ENCODE measurements at regions of chr12 and their contacts with region 1.

Region 1: DNA sequence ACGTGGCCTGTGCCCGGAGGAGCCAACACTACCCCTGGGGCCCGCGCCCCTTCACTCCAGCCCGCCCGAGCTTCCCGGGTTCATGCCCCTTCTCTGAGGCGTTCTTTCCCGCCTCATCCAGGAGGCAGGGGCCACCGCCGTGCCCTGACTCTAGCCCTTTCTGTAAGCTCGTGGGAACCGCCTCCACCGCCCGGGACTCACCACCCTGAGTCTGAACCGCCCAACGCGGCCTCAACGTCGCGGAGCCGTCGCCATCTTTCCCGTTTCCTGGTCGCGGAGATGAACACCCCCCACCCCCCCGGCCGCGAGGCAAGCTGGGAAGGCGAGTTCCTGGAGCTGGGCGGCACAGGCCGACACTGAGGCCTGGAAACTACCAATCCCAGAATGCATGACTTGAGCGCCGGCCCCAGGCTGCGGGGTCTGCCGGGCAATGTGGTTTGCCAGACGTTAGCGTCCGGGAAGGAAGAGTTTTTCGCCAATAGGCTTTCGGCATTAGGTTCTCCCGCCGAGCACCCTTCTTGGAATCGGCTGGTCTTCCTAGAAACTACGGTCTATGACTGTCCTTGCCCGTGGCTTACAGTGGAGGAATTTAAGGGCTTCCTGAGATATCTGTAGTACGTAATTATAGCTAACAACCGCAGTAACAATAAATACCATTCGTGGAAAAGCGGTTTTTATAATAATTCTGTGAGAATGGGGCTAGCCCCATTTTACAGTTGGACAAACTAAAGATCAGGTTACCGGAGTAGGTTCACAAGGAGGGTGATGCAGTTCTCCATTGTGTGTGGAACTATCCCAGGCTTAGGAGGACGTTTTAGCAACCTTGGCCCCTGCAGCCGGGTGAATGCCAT is at the start of gene DDX23:
- DNase-seq: peak; percentile 95
- ATAC-seq: peak; percentile 97
- H3K4me3 ChIP-seq: peak within 1 kb of the TSS; percentile 76 to 97 (median 93)
- H3K4me3 Mint-ChIP-seq: peak within 1 kb of the TSS; percentile 97
- H3K27ac ChIP-seq: peak within 1 kb of the TSS; percentile 87 to 90
- H3K27ac Mint-ChIP-seq: peak within 1 kb of the TSS; percentile 98
- H3K4me1 ChIP-seq: peaks cover 14 to 25% of the 10 kb centered on the region in 2 donors
- H3K4me1 Mint-ChIP-seq: peaks cover 36% of the 10 kb centered on the region
- H3K27me3 ChIP-seq: no peaks in the 10 kb centered on the region
- H3K27me3 Mint-ChIP-seq: no peaks in the 10 kb centered on the region
- CTCF ChIP-seq: no peak
- total RNA-seq, gene DDX23: 135 and 156 TPM in 2 replicates

Region 2: DNA sequence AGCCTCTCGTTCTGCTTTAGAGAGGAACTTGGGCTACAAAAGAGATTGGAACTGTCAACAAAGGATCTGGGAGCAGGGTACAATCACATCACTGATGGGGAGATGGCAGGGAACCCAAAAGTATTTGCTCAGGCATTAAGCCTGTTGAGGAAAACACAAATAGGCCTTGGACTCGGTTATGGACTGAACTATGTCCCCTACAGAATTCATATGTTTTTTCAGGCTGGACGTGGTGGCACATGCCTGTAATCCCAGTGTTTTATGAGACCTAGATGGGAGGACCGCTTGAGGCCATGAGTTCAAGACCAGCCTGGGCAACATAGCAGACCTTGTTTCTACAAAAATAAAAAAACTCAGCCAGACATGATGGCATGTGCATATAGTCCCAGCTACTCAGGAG is 14.1 kb before region 1 on chr12:
- CTCF ChIA-PET with region 1: interaction called, 12 read pairs
- POLR2A ChIA-PET with region 1: no interaction called
- intact Hi-C with region 1: no loop called
- DNase-seq: no peak
- ATAC-seq: no peak
- H3K4me3 ChIP-seq: no peak overlapping the region
- H3K4me3 Mint-ChIP-seq: no peak overlapping the region
- H3K27ac ChIP-seq: no peak overlapping the region
- H3K27ac Mint-ChIP-seq: no peak overlapping the region
- H3K4me1 ChIP-seq: no peaks in the 10 kb centered on the region
- H3K4me1 Mint-ChIP-seq: no peaks in the 10 kb centered on the region
- H3K27me3 ChIP-seq: no peaks in the 10 kb centered on the region
- H3K27me3 Mint-ChIP-seq: no peaks in the 10 kb centered on the region
- CTCF ChIP-seq: no peak

Region 3: DNA sequence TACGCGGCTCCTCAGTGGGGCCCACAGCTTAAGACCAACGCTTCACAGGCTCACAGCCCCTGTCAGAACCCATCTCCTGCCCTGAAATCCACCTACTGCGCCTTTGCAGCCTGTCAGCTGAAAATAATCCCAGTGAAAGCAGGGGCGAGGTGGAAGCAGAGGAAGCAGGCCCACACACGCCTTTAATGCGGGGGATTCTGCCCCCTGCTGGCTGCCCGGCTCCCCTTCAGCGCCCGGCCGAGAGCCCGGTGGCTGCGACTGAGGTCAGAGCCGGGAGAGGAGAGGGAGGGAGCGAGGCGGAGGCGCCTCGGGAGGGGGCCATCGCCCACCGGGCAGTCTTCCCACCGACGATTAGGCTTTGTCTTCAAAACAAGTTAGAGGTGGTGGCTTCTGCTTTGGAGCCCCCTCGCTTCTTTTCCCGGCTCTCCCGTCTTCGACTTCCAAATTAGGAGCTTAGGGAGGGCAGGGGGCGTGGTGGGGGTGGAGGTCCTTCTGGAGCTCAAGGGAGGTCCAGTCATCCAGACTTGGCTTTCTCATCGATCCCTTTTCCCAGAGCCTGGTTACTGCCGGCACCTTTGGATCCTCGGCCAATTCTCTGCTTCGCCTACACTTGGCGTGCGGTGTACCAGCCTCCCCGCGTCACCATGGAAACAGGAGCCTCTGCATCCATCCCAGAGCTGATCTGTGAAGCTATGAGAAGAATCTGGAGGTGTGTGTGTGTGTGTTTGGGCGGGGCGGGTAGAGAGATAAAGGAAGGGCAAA is 38.7 kb after region 1 on chr12:
- CTCF ChIA-PET with region 1: interaction called, 303 read pairs
- POLR2A ChIA-PET with region 1: interaction called, 8 read pairs
- intact Hi-C with region 1: no loop called
- DNase-seq: peak; percentile 82
- ATAC-seq: peak; percentile 97
- H3K4me3 ChIP-seq: peak overlapping the region in 1 of 5 experiments; percentile 33
- H3K4me3 Mint-ChIP-seq: no peak overlapping the region
- H3K27ac ChIP-seq: no peak overlapping the region
- H3K27ac Mint-ChIP-seq: peak overlapping the region; percentile 32
- H3K4me1 ChIP-seq: peaks cover 8% of the 10 kb centered on the region in 2 donors
- H3K4me1 Mint-ChIP-seq: peaks cover 5% of the 10 kb centered on the region
- H3K27me3 ChIP-seq: peaks cover 0 to 18% (median 7%) of the 10 kb centered on the region in 4 experiments
- H3K27me3 Mint-ChIP-seq: peaks cover 13% of the 10 kb centered on the region
- CTCF ChIP-seq: peak; percentile 95

Region 4: GRCh38 chr12:48936379-48936979 is 84.4 kb after region 1 on chr12:
- CTCF ChIA-PET with region 1: interaction called, 75 read pairs
- POLR2A ChIA-PET with region 1: no interaction called
- intact Hi-C with region 1: loop called (anchors 1 kb)
- DNase-seq: peak; percentile 81
- ATAC-seq: peak; percentile 57
- H3K4me3 ChIP-seq: no peak overlapping the region
- H3K4me3 Mint-ChIP-seq: no peak overlapping the region
- H3K27ac ChIP-seq: no peak overlapping the region
- H3K27ac Mint-ChIP-seq: peak overlapping the region; percentile 4
- H3K4me1 ChIP-seq: peaks cover 16 to 34% of the 10 kb centered on the region in 2 donors
- H3K4me1 Mint-ChIP-seq: peaks cover 37% of the 10 kb centered on the region
- H3K27me3 ChIP-seq: no peaks in the 10 kb centered on the region
- H3K27me3 Mint-ChIP-seq: no peaks in the 10 kb centered on the region
- CTCF ChIP-seq: peak; percentile 97

Region 5: DNA sequence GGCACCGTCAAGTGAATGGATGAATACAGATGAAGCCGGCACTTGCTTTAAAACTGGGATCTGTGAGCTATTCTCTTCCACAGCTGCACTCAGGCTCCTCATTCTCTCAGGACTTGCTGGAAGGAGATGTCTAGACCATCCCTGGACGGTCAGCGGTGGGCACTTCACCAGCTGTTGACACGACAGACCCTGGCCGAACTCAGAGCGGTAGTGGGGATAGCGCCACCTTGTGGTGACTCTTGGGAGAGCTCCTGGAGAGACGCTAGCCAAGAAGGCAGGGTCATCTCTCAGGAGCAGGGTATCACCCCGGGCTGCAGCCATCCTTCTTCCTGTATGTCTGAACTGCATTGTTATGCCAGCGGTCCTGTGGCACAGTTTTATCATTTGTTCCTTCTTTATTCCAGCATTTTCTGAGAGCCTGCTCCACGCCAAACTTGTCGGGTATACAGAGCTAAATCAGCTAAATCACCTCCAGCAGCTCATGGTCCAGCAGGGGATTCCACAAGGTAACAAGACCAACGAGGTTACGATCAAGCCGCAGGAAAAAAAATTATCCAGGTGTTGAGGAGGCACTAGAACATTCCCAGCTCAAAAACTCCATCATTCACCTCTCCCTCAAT is 136.0 kb after region 1 on chr12:
- CTCF ChIA-PET with region 1: interaction called, 17 read pairs
- POLR2A ChIA-PET with region 1: no interaction called
- intact Hi-C with region 1: no loop called
- DNase-seq: peak; percentile 76
- ATAC-seq: peak; percentile 71
- H3K4me3 ChIP-seq: no peak overlapping the region
- H3K4me3 Mint-ChIP-seq: no peak overlapping the region
- H3K27ac ChIP-seq: no peak overlapping the region
- H3K27ac Mint-ChIP-seq: no peak overlapping the region
- H3K4me1 ChIP-seq: peaks cover 0 to 5% of the 10 kb centered on the region in 2 donors
- H3K4me1 Mint-ChIP-seq: peaks cover 6% of the 10 kb centered on the region
- H3K27me3 ChIP-seq: peaks cover 0 to 51% (median 22%) of the 10 kb centered on the region in 4 experiments
- H3K27me3 Mint-ChIP-seq: peaks cover 48% of the 10 kb centered on the region
- CTCF ChIP-seq: peak; percentile 84

Region 6: GRCh38 chr12:49322708-49323523 is 470.8 kb after region 1 on chr12 and contains the start of gene TROAP:
- CTCF ChIA-PET with region 1: no interaction called
- POLR2A ChIA-PET with region 1: no interaction called
- intact Hi-C with region 1: loop called (anchors 2 kb)
- DNase-seq: peak; percentile 98
- ATAC-seq: peak; percentile 99
- H3K4me3 ChIP-seq: peak within 1 kb of the TSS; percentile 66 to 85 (median 70)
- H3K4me3 Mint-ChIP-seq: peak within 1 kb of the TSS; percentile 99
- H3K27ac ChIP-seq: peak within 1 kb of the TSS; percentile 40 to 74
- H3K27ac Mint-ChIP-seq: peak within 1 kb of the TSS; percentile 85
- H3K4me1 ChIP-seq: peaks cover 12 to 18% of the 10 kb centered on the region in 2 donors
- H3K4me1 Mint-ChIP-seq: peaks cover 23% of the 10 kb centered on the region
- H3K27me3 ChIP-seq: no peaks in the 10 kb centered on the region
- H3K27me3 Mint-ChIP-seq: no peaks in the 10 kb centered on the region
- CTCF ChIP-seq: no peak
- total RNA-seq, gene TROAP: 1.0 and 1.7 TPM in 2 replicates